K562 (cell line): ENCODE measurements at regions of chr10 and their contacts with region 1.

Region 1: GRCh38 chr10:12782537-12782936 is 219.0 kb downstream of the CCDC3 start:
- DNase-seq: peak; percentile 63 to 77 (median 68)
- ATAC-seq: peak; percentile 81
- H3K4me3 ChIP-seq: no peak overlapping the region
- H3K27ac ChIP-seq: no peak overlapping the region
- H3K4me1 ChIP-seq: no peaks in the 10 kb centered on the region
- H3K27me3 ChIP-seq: peaks cover 6 to 24% of the 10 kb centered on the region in 2 experiments; a peak in 3 of 5 replicates
- CTCF ChIP-seq: peak; percentile 68 to 90 (median 80)
- EP300 ChIP-seq: no peak
- POLR2A ChIP-seq: no peak
- RAD21 ChIP-seq: peak; percentile 29 to 60; a peak in 3 of 4 replicates

Region 2: DNA sequence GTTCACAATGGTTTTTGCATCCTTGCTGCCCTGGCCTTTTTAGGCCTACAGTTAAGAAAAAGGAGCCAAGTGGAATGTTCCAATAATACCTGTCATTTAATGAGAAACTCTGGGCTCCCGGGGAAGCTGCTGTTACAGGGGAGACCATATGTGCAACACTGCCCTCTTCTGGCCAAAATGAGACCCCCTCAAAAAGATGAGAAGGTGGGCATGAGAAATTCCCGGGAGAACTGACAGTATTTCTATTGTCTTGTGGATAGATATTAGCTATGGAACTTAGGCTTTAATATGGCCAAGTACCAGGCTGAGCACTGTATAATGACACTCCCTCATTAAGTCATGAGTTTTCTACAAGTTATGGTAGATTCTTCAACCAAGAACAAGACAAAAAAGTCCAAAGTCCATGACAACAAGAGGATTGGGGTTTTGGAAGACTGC is 119.6 kb after region 1 on chr10:
- CTCF ChIA-PET with region 1: no interaction called
- POLR2A ChIA-PET with region 1: no interaction called
- in situ Hi-C with region 1: no loop called
- intact Hi-C with region 1: loop called (anchors 10 kb)
- DNase-seq: peak; percentile 62 to 69 (median 65)
- ATAC-seq: peak; percentile 75
- H3K4me3 ChIP-seq: no peak overlapping the region
- H3K27ac ChIP-seq: no peak overlapping the region
- H3K4me1 ChIP-seq: no peaks in the 10 kb centered on the region
- H3K27me3 ChIP-seq: peaks cover 11 to 40% of the 10 kb centered on the region in 2 experiments
- CTCF ChIP-seq: peak; percentile 63 to 78 (median 75)
- EP300 ChIP-seq: no peak
- POLR2A ChIP-seq: no peak
- RAD21 ChIP-seq: peak; percentile 44 to 65

Region 3: GRCh38 chr10:13074561-13075451 is 292.3 kb after region 1 on chr10:
- CTCF ChIA-PET with region 1: interaction called, 4 read pairs
- POLR2A ChIA-PET with region 1: no interaction called
- in situ Hi-C with region 1: no loop called
- intact Hi-C with region 1: loop called (anchors 10 kb)
- DNase-seq: peak; percentile 71 to 75 (median 74)
- ATAC-seq: peak; percentile 97
- H3K4me3 ChIP-seq: no peak overlapping the region
- H3K27ac ChIP-seq: no peak overlapping the region
- H3K4me1 ChIP-seq: no peaks in the 10 kb centered on the region
- H3K27me3 ChIP-seq: no peaks in the 10 kb centered on the region; a peak in 2 of 5 replicates
- CTCF ChIP-seq: peak; percentile 85 to 90 (median 88)
- EP300 ChIP-seq: no peak
- POLR2A ChIP-seq: no peak
- RAD21 ChIP-seq: peak; percentile 73 to 89

Region 4: DNA sequence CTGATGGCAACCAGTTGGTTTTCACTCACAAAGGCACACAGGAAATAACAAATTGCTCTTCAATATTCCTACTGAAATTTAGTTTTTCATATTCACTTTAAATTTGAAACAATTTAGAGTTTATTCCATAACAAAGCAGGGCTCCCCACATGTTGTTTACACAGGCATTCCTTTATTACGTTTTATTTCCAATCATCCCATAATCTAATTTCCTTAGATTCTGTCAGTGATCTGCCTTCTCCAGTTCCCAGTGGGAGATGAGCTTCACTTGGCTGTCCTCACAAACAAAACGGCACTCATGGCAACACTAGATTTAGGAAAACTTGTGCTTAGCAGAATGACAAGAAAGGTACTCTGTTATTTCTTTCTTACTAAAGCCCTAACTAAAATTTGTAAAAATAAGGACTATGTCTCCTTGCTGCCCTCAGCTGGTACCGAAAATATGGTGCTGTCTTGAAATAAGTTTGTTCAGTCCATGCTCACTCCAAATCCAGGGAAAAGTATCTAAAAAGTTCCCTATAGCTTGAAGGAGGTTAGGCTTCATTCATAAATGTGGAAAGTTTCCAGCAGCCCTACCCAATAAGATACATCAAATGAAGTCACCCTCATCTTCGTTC is 494.3 kb after region 1 on chr10:
- CTCF ChIA-PET with region 1: no interaction called
- POLR2A ChIA-PET with region 1: no interaction called
- in situ Hi-C with region 1: no loop called
- intact Hi-C with region 1: no loop called
- DNase-seq: no peak
- ATAC-seq: no peak; the same call in 2 of the 3 replicates
- H3K4me3 ChIP-seq: no peak overlapping the region
- H3K27ac ChIP-seq: no peak overlapping the region
- H3K4me1 ChIP-seq: peaks cover 4 to 6% of the 10 kb centered on the region in 2 experiments; a peak in 3 of 5 replicates
- H3K27me3 ChIP-seq: no peaks in the 10 kb centered on the region
- CTCF ChIP-seq: peak in 1 of 3 experiments; percentile 24; a peak in 1 of 6 replicates
- EP300 ChIP-seq: no peak
- POLR2A ChIP-seq: no peak
- RAD21 ChIP-seq: peak in 1 of 2 experiments; percentile 33; a peak in 2 of 4 replicates